WTC11 (cell line): ENCODE measurements at regions of chr2 and their contacts with region 1.

Region 1: GRCh38 chr2:38465789-38466127 is 88.7 kb upstream of the ATL2 start:
- DNase-seq: peak; percentile 59
- ATAC-seq: peak; percentile 97
- H3K4me3 Mint-ChIP-seq: no peak overlapping the region
- H3K27ac Mint-ChIP-seq: no peak overlapping the region
- H3K4me1 Mint-ChIP-seq: peaks cover 4% of the 10 kb centered on the region
- H3K27me3 Mint-ChIP-seq: no peaks in the 10 kb centered on the region
- CTCF ChIP-seq: 0 out of 2 replicates have a peak, but pooled peaks have one; percentile 19

Region 2: GRCh38 chr2:38274286-38275276 is 191.2 kb before region 1 on chr2:
- CTCF ChIA-PET with region 1: no interaction called
- POLR2A ChIA-PET with region 1: no interaction called
- DNase-seq: no peak
- ATAC-seq: peak; percentile 15; the same call in 1 of the 2 replicates
- H3K4me3 Mint-ChIP-seq: no peak overlapping the region
- H3K27ac Mint-ChIP-seq: no peak overlapping the region
- H3K4me1 Mint-ChIP-seq: peaks cover 53% of the 10 kb centered on the region
- H3K27me3 Mint-ChIP-seq: peaks cover 46% of the 10 kb centered on the region
- CTCF ChIP-seq: peak; percentile 31

Region 3: DNA sequence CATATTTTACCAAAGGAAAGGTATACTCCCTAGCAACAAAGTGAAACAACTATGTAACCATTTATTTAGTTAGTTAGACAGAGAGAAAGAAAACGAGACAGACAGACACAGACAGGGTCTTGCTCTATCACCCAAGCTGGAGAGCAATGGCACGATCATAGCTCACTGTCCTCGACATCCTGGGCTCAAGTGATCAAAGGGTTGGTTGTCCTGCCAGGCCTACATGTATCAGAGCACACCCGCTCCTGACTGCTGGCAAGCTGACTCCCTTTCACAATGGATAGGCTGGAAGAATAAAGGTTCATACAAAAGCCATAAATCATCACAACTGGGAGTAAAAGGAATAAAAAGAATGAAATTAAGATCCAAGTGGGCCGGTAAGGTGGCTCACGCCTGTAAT is 142.1 kb before region 1 on chr2:
- CTCF ChIA-PET with region 1: interaction called, 32 read pairs
- POLR2A ChIA-PET with region 1: no interaction called
- DNase-seq: no peak
- ATAC-seq: no peak
- H3K4me3 Mint-ChIP-seq: no peak overlapping the region
- H3K27ac Mint-ChIP-seq: peak overlapping the region; percentile 73
- H3K4me1 Mint-ChIP-seq: peaks cover 19% of the 10 kb centered on the region
- H3K27me3 Mint-ChIP-seq: no peaks in the 10 kb centered on the region
- CTCF ChIP-seq: no peak

Region 4: DNA sequence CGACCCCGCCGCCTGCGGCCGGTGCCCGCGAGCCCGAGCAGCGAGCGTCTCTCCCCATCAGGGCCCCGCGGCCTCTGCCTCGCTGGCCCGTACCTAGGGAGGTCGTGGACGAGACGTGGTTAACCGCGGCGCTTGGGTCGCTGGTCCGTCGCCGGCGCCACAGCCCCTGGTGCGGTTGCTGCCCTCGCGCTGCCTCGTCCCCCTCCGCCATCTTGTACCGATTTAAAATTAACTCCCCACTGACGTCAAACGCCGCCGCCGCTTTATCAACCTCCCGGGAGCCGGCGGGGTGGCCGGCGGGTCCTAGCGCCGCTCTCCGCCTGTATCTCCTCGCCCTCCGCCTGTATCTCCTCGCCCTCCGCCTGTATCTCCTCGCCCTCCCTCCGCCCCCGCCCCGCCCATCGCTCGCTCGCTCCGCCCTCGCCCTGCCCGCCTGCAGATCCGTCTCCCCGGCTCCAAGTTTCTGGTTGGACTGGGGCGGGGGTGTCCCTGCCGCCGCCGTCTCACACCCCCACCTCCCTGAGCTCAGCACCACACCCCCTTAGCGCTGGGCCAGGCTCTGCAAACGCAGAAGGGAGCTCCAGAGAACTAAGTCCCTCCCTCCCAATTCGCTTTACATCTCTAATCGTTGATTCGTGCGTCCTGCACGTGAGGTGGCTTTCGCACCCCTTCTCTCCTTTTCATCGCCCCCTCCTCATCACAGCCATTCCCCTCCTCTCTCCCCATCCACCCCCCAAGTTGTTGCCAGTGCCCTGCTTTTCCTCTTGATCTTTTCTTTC is 88.5 kb before region 1 on chr2 and contains the start of gene ATL2:
- CTCF ChIA-PET with region 1: interaction called, 47 read pairs
- POLR2A ChIA-PET with region 1: interaction called, 5 read pairs
- DNase-seq: peak; percentile 97
- ATAC-seq: peak; percentile 90
- H3K4me3 Mint-ChIP-seq: peak within 1 kb of the TSS; percentile 94
- H3K27ac Mint-ChIP-seq: peak within 1 kb of the TSS; percentile 100
- H3K4me1 Mint-ChIP-seq: peaks cover 44% of the 10 kb centered on the region
- H3K27me3 Mint-ChIP-seq: no peaks in the 10 kb centered on the region
- CTCF ChIP-seq: no peak
- total RNA-seq, gene ATL2: 81.3 to 90.5 TPM (median 88.7 TPM) in 3 replicates

Region 5: DNA sequence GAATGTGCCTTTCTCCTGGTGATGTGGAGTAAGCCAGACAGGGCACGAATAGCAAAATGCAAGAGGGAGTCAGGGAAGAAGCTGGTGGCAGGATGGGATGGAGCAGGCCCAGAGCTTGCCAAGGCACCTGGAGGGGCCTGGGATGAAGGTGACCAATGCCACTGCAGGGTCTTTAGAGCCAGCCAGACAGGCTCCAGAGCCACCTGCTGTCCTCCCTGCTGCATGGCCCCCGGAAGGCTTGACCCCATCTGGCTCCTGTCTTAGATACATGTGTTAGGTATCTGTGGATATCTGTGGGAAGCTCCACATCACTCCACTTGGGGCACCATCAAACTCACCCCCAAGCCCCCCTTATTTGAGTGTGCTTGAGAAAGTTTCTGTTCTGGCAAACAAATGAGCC is 11.2 kb after region 1 on chr2:
- CTCF ChIA-PET with region 1: interaction called, 12 read pairs
- POLR2A ChIA-PET with region 1: no interaction called
- DNase-seq: no peak
- ATAC-seq: no peak
- H3K4me3 Mint-ChIP-seq: no peak overlapping the region
- H3K27ac Mint-ChIP-seq: no peak overlapping the region
- H3K4me1 Mint-ChIP-seq: peaks cover 7% of the 10 kb centered on the region; the same call in 1 of the 2 replicates
- H3K27me3 Mint-ChIP-seq: no peaks in the 10 kb centered on the region; the same call in 1 of the 2 replicates
- CTCF ChIP-seq: no peak